ENCODE measurements at regions of chr14 and their contacts with region 1.

Region 1: GRCh38 chr14:63276492-63277342 is 42.0 kb downstream of the GPHB5 start:
- DNase-seq: no peak
- ATAC-seq: peak in 3 of 4 donors; percentile 75 to 84 (median 81)
- H3K4me3 ChIP-seq: no peak overlapping the region
- H3K27ac ChIP-seq: no peak overlapping the region
- H3K4me1 ChIP-seq: no peaks in the 10 kb centered on the region
- H3K27me3 ChIP-seq: no peaks in the 10 kb centered on the region
- CTCF ChIP-seq: peak; percentile 56 to 69 (median 59)

Region 2: GRCh38 chr14:62162998-62163589 is 1113.6 kb before region 1 on chr14:
- intact Hi-C with region 1: loop called in 1 of 3 experiments (anchors 10 kb)
- DNase-seq: peak in 1 of 6 donors; percentile 15
- ATAC-seq: peak in 3 of 4 donors; percentile 77 to 86 (median 85)
- H3K4me3 ChIP-seq: no peak overlapping the region
- H3K27ac ChIP-seq: no peak overlapping the region
- H3K4me1 ChIP-seq: no peaks in the 10 kb centered on the region
- H3K27me3 ChIP-seq: peaks cover 0 to 4% (median 0%) of the 10 kb centered on the region in 4 donors
- CTCF ChIP-seq: peak; percentile 38 to 63 (median 48)

Region 3: GRCh38 chr14:62179367-62180018 is 1097.2 kb before region 1 on chr14:
- intact Hi-C with region 1: loop called in 1 of 3 experiments (anchors 5 kb)
- DNase-seq: peak in 5 of 6 donors; percentile 26 to 71 (median 38)
- ATAC-seq: peak; percentile 64 to 89 (median 85)
- H3K4me3 ChIP-seq: no peak overlapping the region
- H3K27ac ChIP-seq: no peak overlapping the region
- H3K4me1 ChIP-seq: no peaks in the 10 kb centered on the region
- H3K27me3 ChIP-seq: no peaks in the 10 kb centered on the region
- CTCF ChIP-seq: peak in 3 of 4 donors; percentile 25 to 42 (median 40)

Region 4: DNA sequence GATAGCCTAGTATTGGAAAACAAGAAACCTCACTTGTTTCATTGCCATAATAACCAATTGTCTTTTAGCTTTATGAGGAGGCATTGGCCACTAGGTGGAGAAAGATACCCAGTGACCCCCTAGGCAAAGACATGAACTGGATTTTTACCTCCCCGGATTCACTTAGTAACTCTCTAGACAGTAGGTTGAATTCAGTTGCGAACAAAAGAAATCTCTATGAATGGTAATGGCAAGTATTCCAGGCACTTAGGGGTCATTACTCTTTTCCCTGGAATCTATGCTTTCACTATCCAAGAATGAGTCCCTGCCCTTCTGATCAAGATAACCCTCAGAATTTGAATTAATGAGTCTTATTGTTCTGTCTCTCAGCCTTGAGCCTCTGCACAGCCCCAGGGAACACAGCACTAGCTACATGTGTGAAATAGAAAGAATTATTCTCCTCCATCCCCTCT is 101.9 kb before region 1 on chr14:
- intact Hi-C with region 1: loop called in 1 of 3 experiments (anchors 10 kb)
- DNase-seq: no peak
- ATAC-seq: peak in 3 of 4 donors; percentile 40 to 72 (median 46)
- H3K4me3 ChIP-seq: no peak overlapping the region
- H3K27ac ChIP-seq: no peak overlapping the region
- H3K4me1 ChIP-seq: no peaks in the 10 kb centered on the region
- H3K27me3 ChIP-seq: peaks cover 0 to 9% (median 0%) of the 10 kb centered on the region in 4 donors
- CTCF ChIP-seq: peak in 3 of 4 donors; percentile 25 to 36 (median 30)

Region 5: DNA sequence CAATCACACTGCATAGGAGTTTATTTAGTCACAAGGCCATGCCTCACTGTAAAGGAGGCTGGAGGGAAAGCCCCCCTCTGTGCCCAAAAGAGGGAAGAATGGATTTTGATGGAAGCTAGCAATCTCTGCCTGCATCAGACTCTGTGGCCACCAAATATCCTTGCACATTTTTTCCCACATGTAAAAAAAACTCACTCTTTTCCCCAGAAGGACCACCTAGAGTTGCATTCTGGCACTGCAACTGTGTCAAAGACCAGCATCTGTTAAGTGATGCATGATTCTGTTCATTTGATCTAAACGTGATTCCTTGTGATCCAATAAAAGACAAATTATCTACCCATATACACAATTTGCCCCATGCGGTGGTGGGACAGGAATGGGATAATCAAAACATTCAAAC is 64.5 kb before region 1 on chr14:
- intact Hi-C with region 1: no loop called
- DNase-seq: no peak
- ATAC-seq: no peak
- H3K4me3 ChIP-seq: no peak overlapping the region
- H3K27ac ChIP-seq: no peak overlapping the region
- H3K4me1 ChIP-seq: no peaks in the 10 kb centered on the region
- H3K27me3 ChIP-seq: no peaks in the 10 kb centered on the region
- CTCF ChIP-seq: no peak